Esophagus squamous epithelium (tissue), 5 donors: ENCODE measurements at regions of chr1 and their contacts with region 1.

Region 1: DNA sequence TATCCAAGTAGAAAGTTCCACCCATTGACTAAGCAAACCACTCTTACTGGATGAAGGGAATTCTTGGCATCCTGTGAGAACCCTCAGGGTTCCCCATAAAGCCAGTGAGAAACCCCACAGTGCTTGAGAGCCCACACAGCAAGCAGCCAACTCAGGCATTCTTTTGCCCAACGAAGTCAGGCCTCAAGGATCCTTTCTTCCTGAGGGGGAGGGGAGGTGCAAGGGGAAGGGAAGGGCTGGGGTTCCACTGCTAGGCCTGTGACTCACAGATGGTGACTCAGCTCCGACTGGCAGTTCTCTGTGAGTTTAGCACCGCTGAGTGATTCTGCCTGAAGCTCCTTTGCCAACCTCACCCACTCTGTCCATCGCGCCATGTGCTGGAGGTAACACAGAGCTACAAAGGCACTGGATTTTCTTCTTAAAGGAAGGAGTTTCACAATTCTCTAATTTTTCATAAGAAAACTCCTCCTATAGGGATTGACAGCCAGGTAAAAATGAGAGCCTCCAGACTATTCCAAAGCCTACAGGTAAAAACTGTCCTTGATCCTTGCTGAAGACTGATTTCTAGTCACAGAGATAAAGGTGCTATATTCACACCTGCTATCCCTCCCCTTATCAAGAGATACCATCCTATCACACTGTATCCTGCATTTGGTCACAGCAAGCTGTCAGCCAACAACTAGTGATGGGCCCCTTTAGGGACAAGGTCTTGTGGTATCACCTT is 4.8 kb downstream of the ENO1 start:
- DNase-seq: peak; percentile 60
- H3K4me3 ChIP-seq: peak overlapping the region in 3 of 4 donors; percentile 1 to 32 (median 17)
- H3K27ac ChIP-seq: peak overlapping the region; percentile 79 to 100 (median 96)
- H3K4me1 ChIP-seq: peaks cover 38 to 87% (median 63%) of the 10 kb centered on the region in 3 donors
- H3K27me3 ChIP-seq: no peaks in the 10 kb centered on the region
- CTCF ChIP-seq: no peak
- POLR2A ChIP-seq: peak in 1 of 4 donors; percentile 26

Region 2: GRCh38 chr1:8905582-8906191 is 32.0 kb after region 1 on chr1:
- intact Hi-C with region 1: loop called (anchors 5 kb)
- DNase-seq: no peak
- H3K4me3 ChIP-seq: no peak overlapping the region
- H3K27ac ChIP-seq: peak overlapping the region; percentile 75 to 82 (median 78)
- H3K4me1 ChIP-seq: peaks cover 15 to 63% (median 25%) of the 10 kb centered on the region in 3 donors
- H3K27me3 ChIP-seq: no peaks in the 10 kb centered on the region
- CTCF ChIP-seq: no peak
- POLR2A ChIP-seq: no peak

Region 3: DNA sequence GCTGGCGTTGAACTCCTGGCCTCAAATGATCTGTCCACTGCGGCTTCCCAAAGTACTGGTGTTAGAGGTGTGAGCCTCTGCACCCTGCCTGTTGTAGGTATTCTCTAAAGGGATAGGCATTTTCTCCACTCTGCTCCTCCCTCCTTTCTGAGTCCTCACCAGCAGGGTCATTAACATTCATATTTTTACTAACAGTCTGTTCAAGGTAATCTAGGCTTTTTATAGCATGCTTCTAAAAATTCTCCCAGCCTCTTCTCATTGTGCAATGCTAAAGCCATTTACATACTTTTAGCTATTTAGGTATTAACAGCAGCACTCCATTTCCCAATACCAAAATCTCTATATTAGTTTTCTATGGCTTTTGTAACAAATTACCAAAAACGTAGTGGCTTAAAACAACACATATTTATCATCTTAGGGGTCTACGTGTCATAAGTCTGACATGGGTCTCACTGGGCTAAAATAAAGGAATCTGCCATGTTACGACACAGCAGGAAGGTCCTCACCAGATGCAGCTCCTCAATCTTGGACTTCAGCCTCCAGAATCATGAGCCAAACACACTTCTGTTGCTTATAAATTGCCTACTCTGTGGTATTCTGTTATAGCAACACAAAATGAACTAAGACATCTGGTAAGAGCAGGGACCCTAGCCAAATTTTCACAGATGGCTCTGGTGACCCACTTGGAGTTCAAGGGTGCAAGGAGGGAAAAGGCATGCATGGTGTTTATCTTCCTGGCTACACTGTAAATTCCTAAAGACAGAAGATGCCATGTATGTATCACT is 155.4 kb after region 1 on chr1:
- intact Hi-C with region 1: no loop called
- DNase-seq: no peak
- H3K4me3 ChIP-seq: no peak overlapping the region
- H3K27ac ChIP-seq: no peak overlapping the region
- H3K4me1 ChIP-seq: no peaks in the 10 kb centered on the region
- H3K27me3 ChIP-seq: no peaks in the 10 kb centered on the region
- CTCF ChIP-seq: no peak
- POLR2A ChIP-seq: no peak